ENCODE measurements at regions of chr5 and their contacts with region 1.

Region 1: GRCh38 chr5:14685757-14686156 is 21.2 kb downstream of the OTULIN start:
- DNase-seq: no peak
- ATAC-seq: peak; percentile 67 to 68
- H3K4me3 ChIP-seq: no peak overlapping the region
- H3K27ac ChIP-seq: peak overlapping the region in 3 of 4 donors; percentile 37 to 67 (median 45)
- H3K4me1 ChIP-seq: peaks cover 31 to 33% of the 10 kb centered on the region in 2 donors
- H3K27me3 ChIP-seq: no peaks in the 10 kb centered on the region
- CTCF ChIP-seq: peak; percentile 55 to 71 (median 66)
- POLR2A ChIP-seq: no peak

Region 2: GRCh38 chr5:14038341-14038959 is 647.3 kb before region 1 on chr5:
- in situ Hi-C with region 1: no loop called
- intact Hi-C with region 1: no loop called
- DNase-seq: no peak
- ATAC-seq: no peak
- H3K4me3 ChIP-seq: no peak overlapping the region
- H3K27ac ChIP-seq: no peak overlapping the region
- H3K4me1 ChIP-seq: peaks cover 18 to 40% of the 10 kb centered on the region in 2 donors
- H3K27me3 ChIP-seq: no peaks in the 10 kb centered on the region
- CTCF ChIP-seq: no peak
- POLR2A ChIP-seq: no peak

Region 3: GRCh38 chr5:14781106-14781505 is 95.3 kb after region 1 on chr5:
- in situ Hi-C with region 1: no loop called
- intact Hi-C with region 1: loop called (anchors 1 kb)
- DNase-seq: no peak
- ATAC-seq: no peak
- H3K4me3 ChIP-seq: no peak overlapping the region
- H3K27ac ChIP-seq: peak overlapping the region in 3 of 4 donors; percentile 10 to 35 (median 28)
- H3K4me1 ChIP-seq: peaks cover 45 to 62% of the 10 kb centered on the region in 2 donors
- H3K27me3 ChIP-seq: no peaks in the 10 kb centered on the region
- CTCF ChIP-seq: no peak
- POLR2A ChIP-seq: no peak

Region 4: DNA sequence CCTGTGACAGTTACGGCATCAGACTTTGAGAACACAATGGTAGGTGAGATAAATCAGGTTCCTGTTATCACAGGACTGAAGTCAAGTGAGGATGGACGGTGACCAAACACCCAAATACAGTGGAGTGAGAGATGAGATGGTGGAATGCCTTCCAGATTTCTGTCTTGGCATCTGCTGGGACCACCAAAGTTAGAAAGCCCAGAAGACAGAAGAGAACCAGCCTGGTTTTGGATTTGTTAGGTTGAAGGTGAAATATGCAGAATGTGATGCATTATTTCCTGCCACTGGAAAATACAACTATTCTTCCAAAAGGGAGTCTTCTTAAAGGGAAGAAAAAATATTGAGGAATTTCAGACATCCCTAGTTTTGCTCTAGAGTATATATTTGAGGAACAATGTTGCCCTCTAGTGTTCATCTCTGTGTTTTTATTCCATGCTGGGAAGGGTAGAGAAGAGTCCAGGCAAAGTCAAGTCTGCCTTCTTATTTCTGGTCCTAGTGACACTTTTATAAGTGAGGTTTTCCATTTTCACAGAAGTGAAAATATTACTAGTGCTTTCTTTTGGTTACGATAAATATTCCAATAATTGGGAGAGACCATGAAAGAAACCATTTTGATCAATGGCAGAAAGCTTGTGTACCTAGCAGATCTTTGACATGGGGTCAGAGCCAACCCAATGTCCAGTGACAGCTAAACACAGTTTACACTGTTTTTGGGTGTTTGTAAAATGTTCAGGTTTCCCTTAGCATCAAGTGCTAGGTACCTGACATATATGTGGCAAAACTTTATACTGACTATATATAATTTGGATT is 328.1 kb after region 1 on chr5:
- in situ Hi-C with region 1: loop called in 2 of 4 experiments (anchors 10 kb)
- intact Hi-C with region 1: no loop called
- DNase-seq: no peak
- ATAC-seq: peak; percentile 71 to 81
- H3K4me3 ChIP-seq: no peak overlapping the region
- H3K27ac ChIP-seq: no peak overlapping the region
- H3K4me1 ChIP-seq: peaks cover 3 to 5% of the 10 kb centered on the region in 2 donors
- H3K27me3 ChIP-seq: no peaks in the 10 kb centered on the region
- CTCF ChIP-seq: peak; percentile 42 to 64 (median 59)
- POLR2A ChIP-seq: no peak

Measured in gastrocnemius medialis (tissue), 4 donors.